PC-3 (cell line): ENCODE measurements at regions of chr14 and their contacts with region 1.

Region 1: DNA sequence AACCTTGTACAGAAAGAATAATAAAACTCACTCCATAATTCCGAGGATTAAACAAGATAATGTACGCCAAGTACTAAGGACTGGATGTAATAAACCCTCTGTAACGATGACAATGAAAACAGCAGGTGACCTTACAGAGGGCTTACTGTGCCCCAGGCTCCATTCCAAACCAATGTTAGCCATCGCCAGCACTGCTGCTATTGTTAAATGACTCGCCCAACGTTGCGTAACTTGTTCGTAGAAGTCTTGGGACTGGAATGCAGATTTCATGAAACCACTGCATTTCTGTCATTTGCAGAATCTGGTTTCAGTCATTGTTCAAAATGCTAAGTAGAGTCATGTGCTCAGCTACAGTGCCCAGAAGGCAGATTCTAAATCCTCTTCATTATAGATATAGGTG is 728 bp upstream of the STON2 start:
- DNase-seq: peak; percentile 99
- ATAC-seq: peak; percentile 77
- H3K4me3 ChIP-seq: peak overlapping the region; percentile 58
- H3K27ac ChIP-seq: peak overlapping the region; percentile 99
- H3K4me1 ChIP-seq: peaks cover 51% of the 10 kb centered on the region
- H3K27me3 ChIP-seq: no peaks in the 10 kb centered on the region
- CTCF ChIP-seq: no peak

Region 2: DNA sequence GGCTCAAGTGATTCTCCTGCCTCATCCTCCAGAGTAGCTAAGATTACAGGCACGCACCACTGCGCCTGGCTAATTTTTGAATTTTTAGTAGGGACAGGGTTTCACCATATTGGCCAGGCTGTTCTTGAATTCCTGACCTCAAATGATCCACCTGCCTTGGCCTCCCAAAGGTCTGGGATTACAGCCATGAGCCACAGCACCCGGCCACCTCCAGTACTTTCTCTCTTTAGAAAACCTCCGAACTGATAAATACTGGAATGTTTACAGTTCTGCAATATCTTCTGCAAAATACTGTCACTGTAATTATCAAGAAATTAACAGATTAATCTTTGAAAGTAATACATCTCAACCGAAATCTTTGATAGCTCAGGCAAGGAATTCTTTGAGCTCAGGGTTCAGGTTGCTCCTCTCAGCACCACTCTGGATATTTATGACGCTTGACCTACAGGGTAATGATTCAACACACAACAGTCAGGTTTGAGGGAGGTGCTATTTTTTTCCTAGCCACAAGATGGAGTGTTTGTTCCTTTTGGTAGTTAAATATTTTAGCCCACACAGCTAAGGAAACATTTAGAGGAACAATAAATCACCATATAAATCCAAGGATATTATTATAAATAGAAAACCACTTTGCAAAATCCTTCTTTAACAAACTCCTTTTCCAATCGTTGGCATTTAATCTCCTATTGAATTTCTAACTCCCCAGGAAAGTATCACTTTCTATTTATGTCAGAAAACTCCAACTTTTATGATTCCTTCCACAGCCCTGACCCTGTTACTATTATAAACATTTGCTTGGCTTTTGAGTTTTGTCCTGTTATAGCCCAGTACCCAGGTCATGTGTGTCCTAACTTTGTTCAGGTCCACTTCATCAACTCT is 131.5 kb before region 1 on chr14:
- CTCF ChIA-PET with region 1: interaction called, 5 read pairs
- POLR2A ChIA-PET with region 1: no interaction called
- intact Hi-C with region 1: loop called (anchors 1 kb)
- DNase-seq: peak; percentile 90
- ATAC-seq: peak; percentile 78
- H3K4me3 ChIP-seq: no peak overlapping the region
- H3K27ac ChIP-seq: no peak overlapping the region
- H3K4me1 ChIP-seq: peaks cover 32% of the 10 kb centered on the region
- H3K27me3 ChIP-seq: no peaks in the 10 kb centered on the region
- CTCF ChIP-seq: peak; percentile 90

Region 3: DNA sequence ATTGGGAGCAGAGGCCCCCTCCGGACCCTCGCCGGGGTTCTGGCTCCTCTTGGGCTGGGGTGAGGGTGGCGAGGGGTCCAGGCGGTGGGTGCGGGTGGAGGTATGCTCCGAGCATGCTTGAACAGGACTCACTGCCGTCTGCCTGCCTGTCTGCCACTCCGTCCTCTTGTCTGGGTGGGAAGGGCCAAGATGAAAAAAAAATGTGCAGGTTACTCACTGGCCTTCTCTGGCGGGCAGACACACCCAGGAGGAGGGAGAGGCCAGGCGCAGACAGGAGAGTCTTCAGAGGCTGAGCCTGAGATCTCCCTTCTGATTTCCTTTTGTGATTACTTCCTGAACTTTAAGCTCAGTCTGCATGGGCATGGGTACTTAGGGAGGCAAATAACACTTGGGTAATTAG is 76.8 kb before region 1 on chr14:
- CTCF ChIA-PET with region 1: no interaction called
- POLR2A ChIA-PET with region 1: no interaction called
- intact Hi-C with region 1: loop called (anchors 2 kb)
- DNase-seq: peak; percentile 84
- ATAC-seq: peak; percentile 99
- H3K4me3 ChIP-seq: peak overlapping the region; percentile 76
- H3K27ac ChIP-seq: peak overlapping the region; percentile 47
- H3K4me1 ChIP-seq: peaks cover 27% of the 10 kb centered on the region
- H3K27me3 ChIP-seq: no peaks in the 10 kb centered on the region
- CTCF ChIP-seq: no peak

Region 4: DNA sequence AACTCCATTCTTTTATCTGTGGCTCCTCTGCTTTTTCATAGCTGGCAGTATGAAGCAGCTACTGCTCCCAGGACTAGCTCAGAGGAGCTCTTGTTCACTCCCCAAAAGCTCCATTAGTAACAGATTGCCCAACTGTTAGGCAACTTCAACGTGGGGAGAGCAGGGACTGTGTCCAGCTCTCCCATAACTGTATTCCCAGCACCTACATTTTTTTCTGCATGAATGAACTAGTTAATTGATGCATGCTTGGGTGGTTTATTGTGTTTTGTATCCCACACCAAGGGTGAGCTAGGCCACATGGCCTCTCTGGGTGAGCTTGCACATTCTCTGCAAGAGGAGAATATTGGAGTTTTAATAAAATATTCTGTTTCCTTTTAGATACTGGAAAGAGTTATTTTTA is 16.0 kb before region 1 on chr14:
- CTCF ChIA-PET with region 1: no interaction called
- POLR2A ChIA-PET with region 1: no interaction called
- intact Hi-C with region 1: loop called (anchors 1 kb)
- DNase-seq: peak; percentile 62
- ATAC-seq: peak; percentile 9
- H3K4me3 ChIP-seq: no peak overlapping the region
- H3K27ac ChIP-seq: no peak overlapping the region
- H3K4me1 ChIP-seq: peaks cover 37% of the 10 kb centered on the region
- H3K27me3 ChIP-seq: no peaks in the 10 kb centered on the region
- CTCF ChIP-seq: no peak

Region 5: GRCh38 chr14:81453166-81453766 is 52.4 kb after region 1 on chr14:
- CTCF ChIA-PET with region 1: no interaction called
- POLR2A ChIA-PET with region 1: no interaction called
- intact Hi-C with region 1: loop called (anchors 5 kb)
- DNase-seq: peak; percentile 78
- ATAC-seq: peak; percentile 77
- H3K4me3 ChIP-seq: no peak overlapping the region
- H3K27ac ChIP-seq: no peak overlapping the region
- H3K4me1 ChIP-seq: no peaks in the 10 kb centered on the region
- H3K27me3 ChIP-seq: no peaks in the 10 kb centered on the region
- CTCF ChIP-seq: peak; percentile 92